B cell (primary cell): ENCODE measurements at regions of chr9 and their contacts with region 1.

Region 1: DNA sequence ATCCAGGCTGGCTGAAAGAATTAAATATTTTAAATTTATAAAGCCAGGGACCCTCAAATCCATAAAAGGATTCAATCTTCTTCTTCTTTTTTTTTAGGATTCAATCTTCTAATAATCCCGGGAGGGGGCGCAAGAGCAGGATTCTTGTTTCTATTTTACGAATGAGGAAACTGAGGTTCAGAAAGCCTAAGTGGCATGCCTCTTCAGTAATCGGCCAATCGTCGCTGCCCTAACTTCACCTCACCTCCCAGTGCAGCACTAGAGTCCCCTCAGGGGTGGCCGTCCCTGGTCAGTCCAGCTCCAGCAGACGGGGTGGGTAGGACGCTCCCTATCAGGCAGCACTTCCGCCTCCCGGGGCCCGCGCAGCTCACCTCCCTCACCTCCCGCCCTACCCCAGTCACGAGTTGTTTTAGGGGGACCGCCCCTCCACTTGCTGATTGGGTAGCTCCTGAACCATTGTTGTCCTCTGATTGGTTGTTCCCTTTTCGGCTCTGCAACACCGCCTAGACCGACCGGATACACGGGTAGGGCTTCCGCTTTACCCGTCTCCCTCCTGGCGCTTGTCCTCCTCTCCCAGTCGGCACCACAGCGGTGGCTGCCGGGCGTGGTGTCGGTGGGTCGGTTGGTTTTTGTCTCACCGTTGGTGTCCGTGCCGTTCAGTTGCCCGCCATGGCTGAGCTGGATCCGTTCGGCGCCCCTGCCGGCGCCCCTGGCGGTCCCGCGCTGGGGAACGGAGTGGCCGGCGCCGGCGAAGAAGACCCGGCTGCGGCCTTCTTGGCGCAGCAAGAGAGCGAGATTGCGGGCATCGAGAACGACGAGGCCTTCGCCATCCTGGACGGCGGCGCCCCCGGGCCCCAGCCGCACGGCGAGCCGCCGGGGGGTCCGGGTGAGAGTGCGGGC is at the start of gene CLTA:
- DNase-seq: peak; percentile 97
- ATAC-seq: peak; percentile 97
- H3K4me3 ChIP-seq: peak within 1 kb of the TSS; percentile 66 to 96 (median 91)
- H3K4me3 Mint-ChIP-seq: peak within 1 kb of the TSS; percentile 91
- H3K27ac ChIP-seq: peak within 1 kb of the TSS; percentile 76 to 93
- H3K27ac Mint-ChIP-seq: peak within 1 kb of the TSS; percentile 88
- H3K4me1 ChIP-seq: peaks cover 32 to 43% of the 10 kb centered on the region in 2 donors
- H3K4me1 Mint-ChIP-seq: peaks cover 53% of the 10 kb centered on the region
- H3K27me3 ChIP-seq: no peaks in the 10 kb centered on the region
- H3K27me3 Mint-ChIP-seq: no peaks in the 10 kb centered on the region
- CTCF ChIP-seq: peak; percentile 62
- total RNA-seq, gene CLTA: 71.0 and 73.0 TPM in 2 replicates

Region 2: DNA sequence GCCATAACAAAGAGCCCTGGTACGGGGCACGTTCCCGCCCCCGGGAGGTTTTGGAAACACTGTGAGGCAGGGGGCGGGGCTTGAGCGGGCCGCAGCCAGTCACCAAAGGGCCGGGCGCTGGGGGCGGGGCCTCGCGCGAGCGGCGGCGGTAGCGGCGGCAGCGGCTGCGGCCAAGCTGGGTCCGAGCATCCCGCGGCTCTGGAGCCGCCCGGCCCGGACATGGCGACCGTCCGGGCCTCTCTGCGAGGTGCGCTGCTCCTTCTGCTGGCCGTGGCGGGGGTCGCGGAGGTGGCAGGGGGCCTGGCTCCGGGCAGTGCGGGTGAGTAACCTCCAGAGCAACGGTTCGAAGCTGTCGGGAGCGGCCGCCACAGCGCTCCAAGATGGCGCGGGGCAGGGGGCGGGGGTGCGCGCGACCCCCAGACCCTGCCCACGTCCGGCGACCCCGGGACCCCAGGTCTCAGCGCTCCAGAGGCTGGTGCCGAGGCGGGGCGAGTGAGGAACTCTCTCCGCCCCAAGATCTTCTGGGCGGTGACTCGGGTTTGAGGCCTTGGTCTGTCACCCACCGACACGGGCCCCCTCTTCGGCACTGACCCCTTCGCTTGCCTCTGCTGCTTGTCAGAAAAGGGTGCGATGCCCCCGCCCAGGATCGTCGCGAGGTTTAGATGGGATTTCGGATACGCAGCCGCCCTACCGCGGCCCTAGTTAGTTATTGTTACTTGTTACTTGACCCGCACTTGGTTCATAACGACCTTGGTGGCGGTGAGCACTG is 153.7 kb before region 1 on chr9 and contains the start of gene RECK:
- CTCF ChIA-PET with region 1: no interaction called
- POLR2A ChIA-PET with region 1: interaction called, 5 read pairs
- intact Hi-C with region 1: loop called (anchors 1 kb)
- DNase-seq: peak; percentile 88
- ATAC-seq: peak; percentile 98
- H3K4me3 ChIP-seq: peak within 1 kb of the TSS; percentile 52 to 82 (median 74)
- H3K4me3 Mint-ChIP-seq: peak within 1 kb of the TSS; percentile 88
- H3K27ac ChIP-seq: peak within 1 kb of the TSS in 1 of 2 donors; percentile 55
- H3K27ac Mint-ChIP-seq: peak within 1 kb of the TSS; percentile 76
- H3K4me1 ChIP-seq: peaks cover 19 to 21% of the 10 kb centered on the region in 2 donors
- H3K4me1 Mint-ChIP-seq: peaks cover 25% of the 10 kb centered on the region
- H3K27me3 ChIP-seq: peaks cover 0 to 3% (median 0%) of the 10 kb centered on the region in 4 experiments
- H3K27me3 Mint-ChIP-seq: no peaks in the 10 kb centered on the region
- CTCF ChIP-seq: no peak
- total RNA-seq, gene RECK: 7.7 and 7.9 TPM in 2 replicates

Region 3: GRCh38 chr9:36136272-36136893 is 54.3 kb before region 1 on chr9 and contains the start of gene GLIPR2:
- CTCF ChIA-PET with region 1: interaction called, 4 read pairs
- POLR2A ChIA-PET with region 1: interaction called, 7 read pairs
- intact Hi-C with region 1: loop called (anchors 2 kb)
- DNase-seq: peak; percentile 86
- ATAC-seq: peak; percentile 99
- H3K4me3 ChIP-seq: peak within 1 kb of the TSS; percentile 47 to 79 (median 68)
- H3K4me3 Mint-ChIP-seq: peak within 1 kb of the TSS; percentile 96
- H3K27ac ChIP-seq: peak within 1 kb of the TSS; percentile 11 to 75
- H3K27ac Mint-ChIP-seq: peak within 1 kb of the TSS; percentile 93
- H3K4me1 ChIP-seq: peaks cover 38 to 39% of the 10 kb centered on the region in 2 donors
- H3K4me1 Mint-ChIP-seq: peaks cover 50% of the 10 kb centered on the region
- H3K27me3 ChIP-seq: no peaks in the 10 kb centered on the region
- H3K27me3 Mint-ChIP-seq: no peaks in the 10 kb centered on the region
- CTCF ChIP-seq: peak; percentile 17
- total RNA-seq, gene GLIPR2: 13.7 and 15.2 TPM in 2 replicates

Region 4: GRCh38 chr9:36166101-36166927 is 24.3 kb before region 1 on chr9:
- CTCF ChIA-PET with region 1: interaction called, 44 read pairs
- POLR2A ChIA-PET with region 1: interaction called, 3 read pairs
- intact Hi-C with region 1: loop called (anchors 1 kb)
- DNase-seq: peak; percentile 88
- ATAC-seq: peak; percentile 99
- H3K4me3 ChIP-seq: peak overlapping the region in 4 of 5 experiments; percentile 43 to 63 (median 52)
- H3K4me3 Mint-ChIP-seq: peak overlapping the region; percentile 83
- H3K27ac ChIP-seq: no peak overlapping the region
- H3K27ac Mint-ChIP-seq: peak overlapping the region; percentile 29
- H3K4me1 ChIP-seq: peaks cover 0 to 10% of the 10 kb centered on the region in 2 donors
- H3K4me1 Mint-ChIP-seq: peaks cover 3% of the 10 kb centered on the region
- H3K27me3 ChIP-seq: no peaks in the 10 kb centered on the region
- H3K27me3 Mint-ChIP-seq: peaks cover 2% of the 10 kb centered on the region
- CTCF ChIP-seq: peak; percentile 98

Region 5: DNA sequence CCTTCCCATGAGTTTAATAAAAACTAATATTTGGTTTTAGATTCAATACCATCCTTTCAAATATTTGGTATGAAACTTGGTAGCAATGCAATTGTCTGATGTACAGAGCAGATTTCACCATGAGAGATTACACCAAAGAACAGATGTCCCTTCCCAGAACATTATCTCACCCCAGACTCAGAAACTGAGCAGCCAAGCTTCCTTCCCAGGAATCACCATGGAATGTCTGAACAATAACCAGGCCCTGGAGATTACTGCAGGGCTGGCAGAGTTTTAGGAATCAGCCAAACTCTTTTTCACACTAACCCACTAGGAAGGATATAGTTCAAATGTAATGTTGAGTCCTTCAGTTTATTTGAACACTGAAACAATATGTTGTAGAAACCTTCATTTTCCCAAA is 23.9 kb after region 1 on chr9:
- CTCF ChIA-PET with region 1: no interaction called
- POLR2A ChIA-PET with region 1: no interaction called
- intact Hi-C with region 1: no loop called
- DNase-seq: no peak
- ATAC-seq: no peak
- H3K4me3 ChIP-seq: no peak overlapping the region
- H3K4me3 Mint-ChIP-seq: no peak overlapping the region
- H3K27ac ChIP-seq: no peak overlapping the region
- H3K27ac Mint-ChIP-seq: no peak overlapping the region
- H3K4me1 ChIP-seq: no peaks in the 10 kb centered on the region
- H3K4me1 Mint-ChIP-seq: peaks cover 9% of the 10 kb centered on the region
- H3K27me3 ChIP-seq: no peaks in the 10 kb centered on the region
- H3K27me3 Mint-ChIP-seq: no peaks in the 10 kb centered on the region
- CTCF ChIP-seq: no peak

Region 6: DNA sequence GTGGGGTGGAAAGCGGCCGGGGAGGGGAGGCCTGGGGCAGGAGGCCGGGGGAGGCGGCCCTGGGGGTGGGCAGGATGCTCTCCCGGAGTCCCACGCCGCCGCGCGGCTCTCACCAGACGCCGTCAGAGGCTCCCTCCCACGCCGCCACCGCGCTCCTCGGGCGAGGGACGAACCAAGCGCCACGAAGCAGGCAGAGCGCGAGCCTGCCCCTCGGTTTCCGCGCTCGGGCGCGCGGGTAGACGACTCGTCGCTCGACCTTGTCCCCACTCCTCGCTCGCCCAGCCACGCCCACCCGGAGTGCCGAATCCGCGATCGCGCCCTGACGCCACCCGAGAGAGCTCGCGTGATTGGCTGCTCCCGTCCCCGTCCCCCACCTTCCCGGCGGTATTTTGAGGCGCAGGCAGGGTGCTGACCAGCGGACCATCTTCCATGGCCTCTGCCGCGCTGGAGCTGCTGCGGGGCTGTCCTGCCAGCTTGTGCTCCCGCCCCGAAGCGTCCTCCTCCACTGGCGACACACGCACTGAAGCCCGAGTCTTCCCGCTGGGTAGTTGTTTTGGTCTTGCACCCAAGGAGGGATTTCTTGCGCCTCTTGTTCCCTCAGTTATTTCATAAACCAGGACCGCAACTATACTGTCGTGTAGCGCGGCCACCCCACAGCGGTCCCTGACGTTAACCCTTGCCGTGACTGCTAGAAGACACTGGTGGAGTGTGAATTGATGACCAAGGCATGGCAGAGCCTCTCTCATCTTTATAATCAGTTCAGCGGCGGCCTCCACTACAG is 67.8 kb after region 1 on chr9 and contains the start of gene GNE:
- CTCF ChIA-PET with region 1: no interaction called
- POLR2A ChIA-PET with region 1: no interaction called
- intact Hi-C with region 1: loop called (anchors 1 kb)
- DNase-seq: peak; percentile 97
- ATAC-seq: peak; percentile 82
- H3K4me3 ChIP-seq: peak within 1 kb of the TSS; percentile 38 to 75 (median 68)
- H3K4me3 Mint-ChIP-seq: peak within 1 kb of the TSS; percentile 99
- H3K27ac ChIP-seq: peak within 1 kb of the TSS; percentile 87 to 94
- H3K27ac Mint-ChIP-seq: peak within 1 kb of the TSS; percentile 96
- H3K4me1 ChIP-seq: peaks cover 12 to 15% of the 10 kb centered on the region in 2 donors
- H3K4me1 Mint-ChIP-seq: peaks cover 17% of the 10 kb centered on the region
- H3K27me3 ChIP-seq: no peaks in the 10 kb centered on the region
- H3K27me3 Mint-ChIP-seq: no peaks in the 10 kb centered on the region
- CTCF ChIP-seq: no peak
- total RNA-seq, gene GNE: 20.6 and 21.6 TPM in 2 replicates

Region 7: DNA sequence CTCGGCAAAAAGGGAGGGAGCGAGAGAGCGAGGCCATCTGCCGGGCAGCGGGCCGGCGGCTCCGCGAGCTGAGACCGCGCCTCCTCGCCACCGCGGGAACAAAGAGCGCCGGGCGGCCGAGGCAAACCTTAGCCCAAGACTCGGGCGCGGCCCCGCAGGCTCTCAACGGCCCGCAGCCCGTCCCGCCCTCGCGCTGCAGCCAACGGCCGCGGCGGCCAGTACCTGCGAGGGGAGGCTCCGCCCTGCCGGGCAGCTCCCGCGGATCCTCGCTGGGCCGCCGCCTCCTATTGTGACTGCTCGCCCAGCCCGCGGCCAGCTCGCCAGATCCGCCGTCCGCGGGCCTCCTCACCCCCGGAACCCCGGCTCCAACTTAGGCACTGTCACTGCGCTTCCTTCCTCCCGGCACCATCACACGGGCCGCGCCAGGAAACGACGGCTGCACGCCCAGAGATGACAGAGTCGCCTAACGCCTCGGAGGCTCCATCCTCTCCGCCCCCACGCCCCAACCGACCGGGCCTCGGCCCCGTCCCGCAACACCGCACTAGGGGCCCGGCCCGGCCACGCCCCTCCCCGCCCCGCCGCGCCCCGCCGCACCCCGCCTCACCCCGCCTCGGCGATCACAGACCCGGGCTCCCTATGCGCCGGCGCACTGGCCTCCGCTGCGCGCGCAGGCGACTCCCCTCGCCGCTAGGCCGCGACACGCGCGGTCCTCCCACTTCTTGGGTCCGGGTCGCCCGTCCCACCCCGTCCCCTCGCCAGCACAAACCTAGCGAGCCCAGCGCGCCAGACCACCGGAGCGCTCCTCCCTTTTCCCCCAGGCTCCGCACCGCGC is 209.9 kb after region 1 on chr9:
- CTCF ChIA-PET with region 1: no interaction called
- POLR2A ChIA-PET with region 1: no interaction called
- intact Hi-C with region 1: loop called (anchors 2 kb)
- DNase-seq: peak; percentile 97
- ATAC-seq: peak; percentile 79
- H3K4me3 ChIP-seq: peak overlapping the region; percentile 72 to 90 (median 81)
- H3K4me3 Mint-ChIP-seq: peak overlapping the region; percentile 88
- H3K27ac ChIP-seq: peak overlapping the region; percentile 94 to 98
- H3K27ac Mint-ChIP-seq: peak overlapping the region; percentile 93
- H3K4me1 ChIP-seq: peaks cover 18 to 21% of the 10 kb centered on the region in 2 donors
- H3K4me1 Mint-ChIP-seq: peaks cover 34% of the 10 kb centered on the region
- H3K27me3 ChIP-seq: no peaks in the 10 kb centered on the region
- H3K27me3 Mint-ChIP-seq: no peaks in the 10 kb centered on the region
- CTCF ChIP-seq: no peak

Region 8: GRCh38 chr9:36487482-36488388 is 297.1 kb after region 1 on chr9:
- CTCF ChIA-PET with region 1: interaction called, 3 read pairs
- POLR2A ChIA-PET with region 1: no interaction called
- intact Hi-C with region 1: loop called (anchors 5 kb)
- DNase-seq: peak; percentile 93
- ATAC-seq: peak; percentile 90
- H3K4me3 ChIP-seq: peak overlapping the region; percentile 46 to 96 (median 61)
- H3K4me3 Mint-ChIP-seq: peak overlapping the region; percentile 96
- H3K27ac ChIP-seq: peak overlapping the region; percentile 94 to 97
- H3K27ac Mint-ChIP-seq: peak overlapping the region; percentile 99
- H3K4me1 ChIP-seq: peaks cover 26 to 30% of the 10 kb centered on the region in 2 donors
- H3K4me1 Mint-ChIP-seq: peaks cover 51% of the 10 kb centered on the region
- H3K27me3 ChIP-seq: no peaks in the 10 kb centered on the region
- H3K27me3 Mint-ChIP-seq: no peaks in the 10 kb centered on the region
- CTCF ChIP-seq: no peak